Activated B cell treated with CpG ODN at 0.5 μM for 24 hours (primary cell): ENCODE measurements at regions of chr3 and their contacts with region 1.

Region 1: DNA sequence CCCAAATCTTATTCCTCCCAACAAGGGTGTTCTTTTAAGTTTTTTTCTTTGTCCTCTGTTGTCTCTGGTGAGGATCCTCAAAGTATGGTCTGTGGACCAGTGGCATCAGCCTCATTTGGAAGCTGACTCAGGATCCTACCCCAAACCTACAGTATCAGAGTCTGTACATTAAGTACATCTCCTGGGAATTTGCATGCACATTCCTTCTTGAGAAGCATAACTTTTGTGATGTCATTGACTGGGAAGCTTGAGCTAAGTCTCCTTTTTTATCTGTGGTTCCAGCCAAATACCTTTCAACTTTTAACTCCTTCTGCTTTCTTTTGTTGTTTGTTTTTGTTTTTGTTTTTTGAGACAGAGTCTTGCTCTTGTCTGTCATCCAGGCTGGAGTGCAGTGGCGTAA is 40.5 kb downstream of the ARMC8 start:
- DNase-seq: no peak
- ATAC-seq: no peak
- H3K4me3 Mint-ChIP-seq: no peak overlapping the region
- H3K27ac Mint-ChIP-seq: no peak overlapping the region
- H3K4me1 Mint-ChIP-seq: no peaks in the 10 kb centered on the region
- H3K27me3 Mint-ChIP-seq: no peaks in the 10 kb centered on the region
- CTCF ChIP-seq: no peak

Region 2: DNA sequence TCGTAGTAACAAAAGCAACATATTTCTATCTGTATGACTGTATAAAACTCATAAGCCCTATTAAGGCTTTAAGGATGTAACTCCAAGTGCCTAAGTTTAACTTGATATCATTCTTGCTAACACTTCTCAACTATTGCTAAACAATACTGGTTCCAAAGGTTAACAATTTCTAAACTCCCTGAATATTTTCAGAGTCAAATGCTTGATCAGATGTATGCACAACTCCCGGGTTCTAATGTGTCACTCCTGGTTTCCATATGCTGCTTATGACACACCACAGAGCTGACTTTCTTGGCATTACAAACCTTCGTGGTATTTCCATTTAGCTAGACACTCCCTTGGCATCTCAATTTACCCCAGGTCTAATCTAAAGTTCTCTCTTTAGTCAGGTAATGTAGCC is 138.6 kb before region 1 on chr3:
- CTCF ChIA-PET with region 1: no interaction called
- POLR2A ChIA-PET with region 1: no interaction called
- intact Hi-C with region 1: no loop called
- DNase-seq: no peak
- ATAC-seq: no peak
- H3K4me3 Mint-ChIP-seq: no peak overlapping the region
- H3K27ac Mint-ChIP-seq: no peak overlapping the region
- H3K4me1 Mint-ChIP-seq: no peaks in the 10 kb centered on the region
- H3K27me3 Mint-ChIP-seq: peaks cover 5% of the 10 kb centered on the region
- CTCF ChIP-seq: no peak

Region 3: DNA sequence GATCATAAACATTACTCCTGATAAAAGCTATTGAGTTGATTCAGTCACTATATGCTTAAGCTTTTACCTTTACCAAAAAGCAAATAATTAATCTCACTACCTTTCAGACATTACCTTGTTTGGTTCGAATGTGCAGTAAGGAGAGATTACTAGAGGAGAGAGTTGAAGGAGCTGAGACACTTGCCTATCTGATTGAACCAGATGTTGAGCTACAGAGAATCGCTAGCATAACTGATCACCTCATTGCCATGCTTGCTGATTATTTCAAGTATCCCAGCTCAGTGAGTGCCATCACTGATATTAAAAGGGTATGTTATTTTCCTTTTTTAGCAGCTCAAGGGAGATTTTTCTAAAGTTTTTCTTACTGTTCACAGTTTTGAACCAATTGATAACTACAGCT is 14.0 kb after region 1 on chr3:
- CTCF ChIA-PET with region 1: no interaction called
- POLR2A ChIA-PET with region 1: interaction called, 11 read pairs
- intact Hi-C with region 1: no loop called
- DNase-seq: no peak
- ATAC-seq: no peak
- H3K4me3 Mint-ChIP-seq: no peak overlapping the region
- H3K27ac Mint-ChIP-seq: no peak overlapping the region
- H3K4me1 Mint-ChIP-seq: no peaks in the 10 kb centered on the region
- H3K27me3 Mint-ChIP-seq: no peaks in the 10 kb centered on the region
- CTCF ChIP-seq: no peak

Region 4: DNA sequence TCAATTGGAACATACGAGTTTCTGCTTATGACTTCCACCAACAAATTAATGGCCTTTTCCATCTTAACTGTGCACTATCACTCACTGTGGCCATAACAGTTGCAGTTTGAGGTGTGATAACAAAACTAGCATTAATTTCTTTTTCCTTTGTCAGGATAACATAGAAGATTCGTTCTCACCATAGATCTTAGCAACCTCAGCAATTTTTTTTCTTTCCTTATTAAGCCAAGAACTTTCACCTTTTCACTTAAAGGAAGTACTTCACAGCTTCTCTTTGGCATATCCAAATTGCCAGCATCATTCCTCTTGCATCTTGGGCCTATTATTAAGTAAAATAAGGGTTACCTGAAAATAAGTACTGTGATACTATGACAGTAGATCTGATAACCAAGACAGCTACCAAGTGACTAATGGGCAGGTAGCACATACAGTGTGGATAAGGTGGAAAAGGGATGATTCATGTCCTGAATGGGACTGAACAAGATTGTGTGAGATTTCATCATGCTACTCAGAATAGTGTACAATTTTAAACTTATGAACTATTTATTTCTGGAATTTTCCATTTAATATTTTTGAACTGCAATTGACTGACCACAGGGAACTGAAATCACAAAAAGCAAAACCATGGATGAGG is 319.8 kb after region 1 on chr3:
- CTCF ChIA-PET with region 1: no interaction called
- POLR2A ChIA-PET with region 1: no interaction called
- intact Hi-C with region 1: no loop called
- DNase-seq: no peak
- ATAC-seq: no peak
- H3K4me3 Mint-ChIP-seq: no peak overlapping the region
- H3K27ac Mint-ChIP-seq: no peak overlapping the region
- H3K4me1 Mint-ChIP-seq: no peaks in the 10 kb centered on the region
- H3K27me3 Mint-ChIP-seq: no peaks in the 10 kb centered on the region
- CTCF ChIP-seq: no peak